Endothelial cell of umbilical vein (primary cell): ENCODE measurements at regions of chr2 and their contacts with region 1.

Region 1: DNA sequence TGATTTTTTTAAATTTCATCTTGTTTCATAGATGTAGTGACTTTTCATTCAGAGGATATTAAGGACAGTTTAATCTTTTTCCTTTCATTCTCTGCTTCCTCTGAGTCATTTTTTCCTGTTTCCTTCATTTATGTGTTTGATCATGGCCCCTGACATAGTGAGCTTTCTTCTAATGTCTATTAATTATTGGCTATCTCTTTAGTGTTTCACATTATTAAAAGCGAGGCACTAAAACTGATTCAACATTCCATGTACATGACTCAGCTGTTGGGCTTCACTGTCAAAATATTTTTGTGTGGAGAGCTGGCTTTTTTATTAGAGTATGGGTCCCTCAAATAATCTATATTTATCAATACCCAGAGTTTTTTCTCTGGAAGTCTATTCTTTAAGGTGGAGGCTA is 125.8 kb downstream of the THSD7B start:
- DNase-seq: peak; percentile 16
- H3K4me3 ChIP-seq: no peak overlapping the region
- H3K27ac ChIP-seq: no peak overlapping the region
- H3K4me1 ChIP-seq: peaks cover 6% of the 10 kb centered on the region
- H3K27me3 ChIP-seq: no peaks in the 10 kb centered on the region
- CTCF ChIP-seq: no peak
- POLR2A ChIP-seq: no peak

Region 2: DNA sequence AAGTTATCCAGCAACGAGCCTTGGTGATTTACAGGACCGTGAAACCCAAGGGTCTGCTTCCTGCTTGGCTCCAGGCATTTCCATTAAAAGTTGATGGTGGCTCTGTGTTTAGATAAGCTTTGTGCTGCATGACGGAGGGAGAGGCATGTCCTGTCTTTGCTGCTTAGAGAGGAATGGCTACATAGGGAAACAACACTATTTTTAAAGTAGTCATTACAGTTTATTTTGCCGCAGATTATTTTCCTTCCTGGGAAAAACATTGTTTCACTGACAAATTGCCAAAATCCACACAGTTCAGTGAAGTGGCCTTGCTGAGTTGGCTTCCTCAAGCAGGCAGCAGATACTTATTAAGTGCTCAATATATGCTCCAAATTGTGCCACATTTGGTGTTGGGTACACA is 27.2 kb before region 1 on chr2:
- CTCF ChIA-PET with region 1: no interaction called
- POLR2A ChIA-PET with region 1: no interaction called
- dilution Hi-C with region 1: no loop called
- intact Hi-C with region 1: loop called (anchors 1 kb)
- DNase-seq: peak; percentile 87
- H3K4me3 ChIP-seq: no peak overlapping the region
- H3K27ac ChIP-seq: peak overlapping the region; percentile 0
- H3K4me1 ChIP-seq: no peaks in the 10 kb centered on the region
- H3K27me3 ChIP-seq: no peaks in the 10 kb centered on the region
- CTCF ChIP-seq: no peak
- POLR2A ChIP-seq: no peak

Region 3: DNA sequence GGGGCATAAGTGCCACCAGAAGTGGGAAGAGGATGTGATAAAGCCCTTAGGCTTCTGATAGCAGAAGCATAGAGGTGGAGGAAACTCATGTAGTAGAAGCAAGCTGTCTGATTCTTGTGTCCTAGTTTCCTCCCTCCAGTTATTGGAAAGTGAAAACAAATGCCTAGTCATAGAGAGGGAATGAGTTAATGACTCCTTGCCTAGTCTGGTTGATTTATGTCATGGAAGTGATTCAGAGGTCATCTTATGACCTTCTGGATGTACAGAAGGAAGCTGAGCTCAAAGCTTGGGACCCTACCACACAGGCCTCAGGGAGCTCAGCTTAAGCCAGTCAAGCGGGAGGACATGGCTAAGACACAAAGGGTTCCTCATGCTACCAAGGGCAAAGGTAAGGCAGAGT is 106.5 kb after region 1 on chr2:
- CTCF ChIA-PET with region 1: no interaction called
- POLR2A ChIA-PET with region 1: no interaction called
- dilution Hi-C with region 1: no loop called
- intact Hi-C with region 1: loop called (anchors 2 kb)
- DNase-seq: peak; percentile 63
- H3K4me3 ChIP-seq: no peak overlapping the region
- H3K27ac ChIP-seq: peak overlapping the region; percentile 24
- H3K4me1 ChIP-seq: peaks cover 3% of the 10 kb centered on the region
- H3K27me3 ChIP-seq: no peaks in the 10 kb centered on the region
- CTCF ChIP-seq: no peak
- POLR2A ChIP-seq: no peak

Region 4: DNA sequence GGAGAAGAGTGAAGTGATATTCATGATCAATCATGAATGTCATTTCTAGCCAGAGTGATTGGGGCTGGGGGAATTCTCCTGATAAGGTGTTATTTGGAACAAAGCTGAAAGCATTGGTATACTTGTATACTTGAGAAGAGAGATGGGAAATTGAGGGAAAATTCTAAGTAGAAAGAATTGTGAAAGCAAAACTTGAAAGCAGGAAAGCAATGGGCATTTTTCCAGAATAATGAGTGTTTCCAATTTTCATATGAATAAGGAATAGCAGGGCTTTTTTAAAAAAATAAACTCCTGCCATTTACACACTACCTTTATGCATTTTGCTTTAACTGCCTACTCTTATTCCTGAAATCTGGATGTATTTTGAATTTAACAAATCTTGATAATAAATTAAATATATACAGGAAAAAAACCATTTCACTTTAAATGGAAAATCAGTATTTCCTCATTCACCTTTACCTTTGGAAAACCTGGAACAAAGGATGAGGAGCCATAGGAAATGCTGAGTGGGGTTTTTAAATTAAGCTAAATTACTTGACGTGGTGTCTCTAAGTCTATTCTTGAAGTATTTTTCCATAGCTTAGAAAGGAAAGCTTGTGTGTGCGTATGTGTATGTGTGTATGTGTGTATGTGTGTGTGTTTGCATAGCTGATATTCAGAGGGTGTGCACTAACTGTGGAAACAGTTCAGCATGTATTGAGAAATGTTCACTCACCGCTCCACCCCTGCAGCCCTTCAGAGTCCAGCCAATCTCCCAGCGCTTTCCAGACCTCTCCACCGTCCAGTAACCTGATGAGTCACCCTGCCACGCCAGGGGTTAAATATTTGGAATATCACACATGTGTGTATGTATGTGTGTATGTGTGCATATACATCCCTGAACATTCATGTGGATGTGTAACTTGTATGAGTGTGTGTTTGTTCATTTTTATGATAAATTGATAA is 301.5 kb after region 1 on chr2:
- CTCF ChIA-PET with region 1: no interaction called
- POLR2A ChIA-PET with region 1: no interaction called
- dilution Hi-C with region 1: no loop called
- intact Hi-C with region 1: no loop called
- DNase-seq: no peak
- H3K4me3 ChIP-seq: no peak overlapping the region
- H3K27ac ChIP-seq: no peak overlapping the region
- H3K4me1 ChIP-seq: no peaks in the 10 kb centered on the region
- H3K27me3 ChIP-seq: no peaks in the 10 kb centered on the region
- CTCF ChIP-seq: no peak
- POLR2A ChIP-seq: no peak